ENCODE measurements at regions of chr12 and their contacts with region 1.

Region 1: GRCh38 chr12:63838411-63838810 is 6.1 kb upstream of the SRGAP1 start:
- DNase-seq: no peak
- H3K4me3 ChIP-seq: no peak overlapping the region
- H3K27ac ChIP-seq: no peak overlapping the region
- H3K4me1 ChIP-seq: peaks cover 0 to 2% (median 0%) of the 10 kb centered on the region in 4 experiments; a peak in 1 of 7 replicates
- H3K27me3 ChIP-seq: peaks cover 0 to 1% (median 0%) of the 10 kb centered on the region in 4 experiments; a peak in 1 of 7 replicates
- CTCF ChIP-seq: no peak
- EP300 ChIP-seq: no peak
- POLR2A ChIP-seq: no peak
- RAD21 ChIP-seq: no peak

Region 2: DNA sequence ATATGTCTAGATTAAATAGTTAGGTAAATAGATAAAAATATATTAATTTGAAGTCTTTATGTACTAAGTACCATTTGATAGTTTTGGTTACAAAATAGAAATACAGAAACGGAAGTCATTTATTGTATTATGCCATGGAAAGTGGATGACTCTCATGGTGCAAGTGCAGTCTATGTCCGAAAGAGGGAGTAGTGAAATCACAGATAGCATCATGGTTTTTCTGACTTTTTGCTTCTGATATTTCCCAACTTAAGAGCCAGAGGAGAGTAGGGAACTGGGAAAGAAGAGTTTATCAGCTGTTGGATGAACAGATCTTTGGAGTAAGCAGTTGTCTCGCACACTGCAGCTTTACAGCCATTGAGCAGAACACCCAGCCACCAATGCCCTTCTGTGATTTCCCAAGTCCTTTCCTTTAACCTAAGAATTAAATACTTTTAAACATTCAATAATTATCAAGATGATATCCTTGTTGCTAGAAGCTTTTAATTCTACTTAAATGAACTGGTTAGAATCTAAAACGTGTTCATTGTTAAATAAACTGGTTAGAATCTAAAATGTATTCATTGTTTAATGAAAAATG is 12.3 kb before region 1 on chr12:
- CTCF ChIA-PET with region 1: interaction called, 11 read pairs
- POLR2A ChIA-PET with region 1: interaction called, 3 read pairs
- DNase-seq: no peak
- H3K4me3 ChIP-seq: no peak overlapping the region
- H3K27ac ChIP-seq: no peak overlapping the region
- H3K4me1 ChIP-seq: no peaks in the 10 kb centered on the region
- H3K27me3 ChIP-seq: no peaks in the 10 kb centered on the region
- CTCF ChIP-seq: peak in 2 of 3 experiments; percentile 60 to 77; a peak in 2 of 4 replicates
- EP300 ChIP-seq: no peak
- POLR2A ChIP-seq: no peak
- RAD21 ChIP-seq: peak; percentile 91 to 93

Region 3: DNA sequence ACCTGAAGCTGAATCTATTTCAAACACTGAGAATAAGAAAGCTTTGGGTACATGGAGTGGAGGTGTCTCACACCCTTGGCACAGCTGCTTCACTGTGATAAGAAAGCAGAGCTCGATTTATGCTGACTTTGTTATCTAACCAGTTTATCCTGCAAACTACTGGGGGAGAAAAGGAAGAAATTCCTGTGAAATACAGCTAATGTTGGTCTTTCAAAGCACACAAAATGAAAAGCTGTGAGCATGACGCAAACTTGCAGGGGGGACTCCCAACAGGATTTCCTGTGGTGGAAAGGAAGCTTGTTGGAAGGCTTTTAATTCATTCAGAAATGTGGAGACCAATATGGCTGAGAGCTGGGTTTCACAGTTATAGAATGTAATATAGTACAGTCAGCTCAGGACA is 59.5 kb after region 1 on chr12:
- CTCF ChIA-PET with region 1: no interaction called
- POLR2A ChIA-PET with region 1: no interaction called
- DNase-seq: no peak
- H3K4me3 ChIP-seq: no peak overlapping the region
- H3K27ac ChIP-seq: no peak overlapping the region
- H3K4me1 ChIP-seq: peaks cover under 1 to 5% (median 3%) of the 10 kb centered on the region in 4 experiments; a peak in 3 of 7 replicates
- H3K27me3 ChIP-seq: no peaks in the 10 kb centered on the region
- CTCF ChIP-seq: no peak
- EP300 ChIP-seq: no peak
- POLR2A ChIP-seq: no peak
- RAD21 ChIP-seq: no peak

Measured in H1 (cell line).